ENCODE measurements at regions of chr1 and their contacts with region 1.

Region 1: DNA sequence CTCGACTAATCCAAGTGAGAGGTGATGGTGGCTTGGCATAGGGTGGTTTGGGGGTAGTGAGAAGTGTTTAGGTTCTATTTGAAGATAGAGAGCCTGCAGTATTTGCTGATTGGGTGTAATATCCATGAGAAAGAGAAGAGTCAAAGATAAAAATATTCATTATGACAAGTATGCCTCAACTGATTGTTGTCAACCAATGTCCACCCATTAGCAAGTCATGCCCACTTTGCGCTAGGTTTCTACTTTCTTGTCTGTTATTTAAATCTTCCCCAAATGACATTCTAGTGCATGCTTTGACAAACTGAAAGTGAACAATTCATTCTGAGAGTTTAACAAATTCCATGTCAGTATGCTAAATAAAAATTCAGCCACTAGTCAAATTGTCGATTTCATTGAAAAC is 3.8 kb upstream of the XCL1 start:
- DNase-seq: no peak
- ATAC-seq: no peak

Region 2: GRCh38 chr1:168335500-168335899 is 237.1 kb before region 1 on chr1:
- intact Hi-C with region 1: loop called in 1 of 2 experiments (anchors 10 kb)
- DNase-seq: no peak
- ATAC-seq: no peak

Region 3: DNA sequence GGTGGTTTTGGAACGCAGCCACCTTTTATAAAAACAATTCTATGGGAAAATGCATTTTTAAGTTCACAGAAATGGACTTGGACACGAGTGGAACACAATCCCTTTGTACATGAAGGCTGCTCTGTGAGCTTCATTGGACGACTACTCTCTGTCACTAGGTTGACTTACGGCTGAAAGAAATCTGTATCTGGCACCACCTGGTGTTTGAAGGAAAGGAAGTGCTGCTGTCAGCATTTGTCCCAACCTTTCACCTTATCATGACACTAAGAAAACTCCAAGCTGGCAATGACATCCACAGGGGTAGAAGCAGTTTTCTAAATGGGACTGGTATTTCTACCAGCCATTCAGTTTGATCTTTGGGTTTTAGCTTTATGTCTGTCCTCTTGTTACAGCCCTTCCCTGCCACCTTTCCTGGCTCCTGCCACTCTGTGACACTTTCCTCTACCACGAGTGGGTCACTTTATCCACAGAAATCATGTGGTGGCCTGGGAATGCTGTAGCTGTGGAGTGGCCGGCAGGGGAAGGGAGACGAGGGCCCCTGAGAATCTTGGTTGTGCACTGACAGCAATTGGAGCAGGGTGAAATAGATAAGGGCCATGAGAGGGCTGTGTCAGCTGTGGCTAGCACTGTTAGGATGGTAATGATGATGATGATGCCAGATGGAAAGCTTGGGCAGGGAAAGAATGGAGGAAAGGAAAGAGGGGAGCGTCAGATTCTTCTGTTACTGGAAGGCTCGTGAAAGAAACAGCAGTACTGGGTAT is 206.7 kb before region 1 on chr1:
- intact Hi-C with region 1: no loop called
- DNase-seq: no peak
- ATAC-seq: peak; percentile 76

Region 4: DNA sequence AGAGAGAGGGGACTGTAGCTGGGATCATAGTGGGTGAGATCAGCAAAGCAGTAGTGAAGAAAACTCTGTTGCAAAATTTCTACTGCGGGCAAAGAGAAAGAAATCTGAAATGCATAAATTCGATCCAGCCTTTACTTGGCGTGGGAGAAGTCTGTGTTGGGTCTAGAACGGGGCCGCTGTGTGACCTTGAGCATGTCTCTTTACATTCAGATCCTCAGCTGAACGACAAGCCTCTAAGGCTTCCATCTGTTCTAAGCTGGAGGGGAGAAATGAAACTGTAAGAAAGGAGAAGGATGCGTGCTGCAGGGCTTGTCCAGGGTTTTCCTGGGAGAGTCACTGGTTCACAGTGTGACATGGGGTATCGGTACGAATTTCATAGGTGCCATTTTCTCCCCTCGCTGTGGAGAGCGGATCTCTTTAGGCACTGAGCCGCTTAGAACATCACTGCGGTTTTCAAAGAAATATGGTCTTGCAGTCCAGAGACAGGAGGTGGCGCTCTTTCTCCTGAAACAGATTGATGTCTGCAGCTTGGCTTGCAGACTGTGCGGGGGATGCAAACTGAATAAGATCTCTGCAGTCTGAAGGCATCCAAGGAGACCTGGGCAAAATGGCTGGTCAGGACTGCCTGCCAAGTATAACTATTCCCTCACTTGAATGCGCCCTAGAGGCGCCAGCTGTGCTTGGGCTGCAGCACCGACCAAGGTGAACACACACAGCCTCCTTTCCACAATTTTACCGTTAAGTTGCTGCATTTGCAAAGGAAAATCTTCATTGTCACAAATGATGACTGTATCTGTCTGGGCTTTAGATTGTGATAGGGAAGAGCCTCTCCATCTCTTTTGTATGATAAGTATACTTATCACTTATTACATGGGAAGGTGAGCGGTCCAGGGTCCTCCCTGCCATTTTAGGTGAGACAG is 132.9 kb before region 1 on chr1:
- intact Hi-C with region 1: loop called in 1 of 2 experiments (anchors 5 kb)
- DNase-seq: peak; percentile 61 to 81
- ATAC-seq: peak; percentile 87

Region 5: DNA sequence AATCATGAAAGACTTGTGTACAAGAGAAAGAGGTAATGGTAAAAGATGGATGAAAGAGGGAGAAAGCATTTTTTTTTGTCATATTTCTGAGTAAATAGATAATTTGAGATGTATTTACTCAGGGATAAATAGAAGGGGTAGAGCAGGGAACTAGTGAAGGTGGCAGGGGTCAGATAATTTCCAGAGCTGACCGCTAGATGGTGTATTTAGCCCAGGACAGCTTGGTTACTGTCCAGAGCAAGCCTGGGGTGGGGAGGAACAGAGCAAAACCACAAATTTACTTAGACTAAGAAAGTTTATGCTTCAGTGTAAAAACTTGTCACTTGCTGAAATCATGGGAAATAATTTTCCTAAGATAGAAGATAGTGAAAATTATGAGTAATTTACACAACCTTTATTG is 120.3 kb before region 1 on chr1:
- intact Hi-C with region 1: no loop called
- DNase-seq: no peak
- ATAC-seq: no peak

Region 6: DNA sequence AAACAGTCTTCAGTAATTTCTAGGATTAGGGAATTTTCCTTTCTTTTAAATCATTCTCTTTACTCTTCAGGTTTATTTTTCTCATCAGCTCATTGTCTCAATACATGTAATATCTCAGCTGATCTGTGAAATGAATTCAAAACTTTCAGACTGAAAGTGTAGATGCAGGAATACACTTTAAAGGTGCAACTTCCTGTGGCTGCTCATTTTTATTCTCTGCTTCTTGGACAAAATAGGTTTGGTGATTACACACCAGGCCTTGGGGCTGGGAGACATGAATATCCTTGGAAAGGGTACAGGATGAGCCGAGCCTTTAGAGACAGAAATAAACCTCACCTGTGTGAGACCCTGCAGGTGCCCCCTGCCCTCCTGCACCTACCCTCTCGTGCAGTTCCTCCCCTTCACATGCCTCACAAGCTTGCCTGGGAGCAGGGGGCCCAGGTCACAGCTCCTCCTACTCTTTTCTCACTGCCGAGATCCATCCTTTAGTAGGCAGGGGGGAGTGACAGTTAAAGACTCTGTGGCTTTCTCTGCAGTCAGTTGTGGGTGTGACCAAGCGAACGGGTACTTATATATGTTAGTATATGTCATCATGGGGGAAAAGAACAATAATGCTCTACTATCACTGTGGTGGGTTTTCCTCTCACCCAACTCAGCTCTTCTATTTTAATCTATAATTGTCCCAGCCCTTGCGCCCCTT is 52.4 kb before region 1 on chr1:
- intact Hi-C with region 1: no loop called
- DNase-seq: no peak
- ATAC-seq: no peak

Measured in left colon (tissue), 2 donors.